Activated T-helper 2 cell treated with anti-CD3 and anti-CD28 coated beads, Interferon-gamma antibody, Interleukin-2, Interleukin-4, amounts not matched to agents 10 μg/mL and 5 μg/mL and 100 μg/mL, durations not matched to agents 14 hours and 24 hours and 36 hours (primary cell): ENCODE measurements at regions of chr22 and their contacts with region 1.

Region 1: DNA sequence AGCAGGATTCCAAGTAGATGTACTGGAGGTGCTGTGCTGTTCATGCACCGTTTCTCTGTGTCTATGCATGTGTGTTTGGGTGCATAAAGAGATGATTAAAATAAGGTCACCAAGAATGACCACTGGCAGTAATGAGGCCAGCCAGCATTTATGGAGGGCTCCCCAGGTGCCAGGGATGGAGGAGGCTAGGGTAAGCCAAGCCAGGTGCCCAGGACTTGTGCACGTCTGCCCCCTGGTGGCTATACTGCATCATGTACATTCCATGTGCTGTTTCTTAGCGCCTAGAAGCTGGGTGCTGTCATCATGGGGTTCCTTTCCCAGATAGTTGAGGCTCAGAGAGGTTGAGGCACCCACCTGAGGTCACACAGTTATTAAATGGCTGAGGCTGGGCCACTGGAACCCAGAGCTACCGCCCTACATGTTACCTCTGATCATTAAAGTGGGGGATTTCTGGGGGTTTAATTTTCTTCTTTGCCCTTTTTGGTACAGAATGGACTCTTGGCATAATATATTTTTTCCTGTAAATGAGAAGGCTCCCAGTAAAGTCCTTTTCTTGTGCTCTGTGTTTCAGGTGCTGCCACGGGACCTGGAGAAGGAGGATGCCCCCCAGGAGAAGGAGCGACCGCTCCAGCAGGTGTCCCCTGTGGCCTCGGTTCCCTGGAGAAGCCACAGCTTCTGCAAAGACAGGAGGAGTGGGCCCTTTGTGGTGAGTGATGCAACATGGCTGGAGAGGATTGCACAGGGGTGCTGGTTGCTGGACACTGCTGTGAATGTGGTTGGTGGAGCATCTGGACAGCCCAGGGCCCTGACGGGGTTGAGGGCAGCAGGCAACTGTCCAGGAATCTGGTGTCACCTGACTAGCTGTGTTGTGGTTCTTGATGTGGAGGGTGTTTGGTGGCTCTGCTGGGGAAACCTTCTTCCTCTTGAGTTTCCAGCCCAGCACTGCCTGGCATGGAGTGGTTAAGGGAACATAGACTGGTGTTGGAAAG is 96.4 kb downstream of the KIAA1671 start:
- DNase-seq: peak; percentile 62
- H3K4me3 Mint-ChIP-seq: no peak overlapping the region
- H3K27ac Mint-ChIP-seq: no peak overlapping the region
- H3K4me1 Mint-ChIP-seq: peaks cover 9% of the 10 kb centered on the region
- H3K27me3 Mint-ChIP-seq: peaks cover 5% of the 10 kb centered on the region

Region 2: DNA sequence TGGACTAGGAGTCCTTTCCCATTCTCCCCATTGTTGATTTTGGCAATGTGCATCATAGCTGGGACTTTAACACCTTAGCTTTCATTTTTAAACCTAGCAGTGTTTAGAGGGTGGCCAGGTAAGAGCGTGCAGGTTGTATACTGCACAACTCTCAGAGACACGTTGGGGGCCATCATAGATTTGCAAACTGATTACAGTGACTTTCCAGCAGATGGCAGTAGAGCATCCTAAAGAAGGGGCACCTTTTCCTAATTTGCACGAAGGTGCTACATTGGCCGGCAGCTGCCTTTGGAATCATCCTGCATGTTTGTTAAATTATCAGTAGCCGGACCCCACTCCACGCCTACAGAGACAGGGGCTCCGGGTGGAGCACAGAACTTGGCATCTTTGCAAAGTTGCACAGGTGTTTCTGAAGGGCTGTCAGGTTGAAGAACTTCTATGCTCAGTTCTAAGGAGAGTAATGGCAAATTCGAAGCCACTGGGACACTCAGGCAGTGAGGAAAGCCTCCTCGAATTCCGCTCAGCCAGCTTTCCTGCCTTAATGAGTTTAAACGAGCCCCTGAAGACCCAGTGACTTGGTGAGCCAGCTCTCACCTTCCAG is 110.1 kb before region 1 on chr22:
- intact Hi-C with region 1: loop called (anchors 1 kb)
- DNase-seq: no peak
- H3K4me3 Mint-ChIP-seq: no peak overlapping the region
- H3K27ac Mint-ChIP-seq: no peak overlapping the region
- H3K4me1 Mint-ChIP-seq: no peaks in the 10 kb centered on the region
- H3K27me3 Mint-ChIP-seq: peaks cover 2% of the 10 kb centered on the region

Region 3: DNA sequence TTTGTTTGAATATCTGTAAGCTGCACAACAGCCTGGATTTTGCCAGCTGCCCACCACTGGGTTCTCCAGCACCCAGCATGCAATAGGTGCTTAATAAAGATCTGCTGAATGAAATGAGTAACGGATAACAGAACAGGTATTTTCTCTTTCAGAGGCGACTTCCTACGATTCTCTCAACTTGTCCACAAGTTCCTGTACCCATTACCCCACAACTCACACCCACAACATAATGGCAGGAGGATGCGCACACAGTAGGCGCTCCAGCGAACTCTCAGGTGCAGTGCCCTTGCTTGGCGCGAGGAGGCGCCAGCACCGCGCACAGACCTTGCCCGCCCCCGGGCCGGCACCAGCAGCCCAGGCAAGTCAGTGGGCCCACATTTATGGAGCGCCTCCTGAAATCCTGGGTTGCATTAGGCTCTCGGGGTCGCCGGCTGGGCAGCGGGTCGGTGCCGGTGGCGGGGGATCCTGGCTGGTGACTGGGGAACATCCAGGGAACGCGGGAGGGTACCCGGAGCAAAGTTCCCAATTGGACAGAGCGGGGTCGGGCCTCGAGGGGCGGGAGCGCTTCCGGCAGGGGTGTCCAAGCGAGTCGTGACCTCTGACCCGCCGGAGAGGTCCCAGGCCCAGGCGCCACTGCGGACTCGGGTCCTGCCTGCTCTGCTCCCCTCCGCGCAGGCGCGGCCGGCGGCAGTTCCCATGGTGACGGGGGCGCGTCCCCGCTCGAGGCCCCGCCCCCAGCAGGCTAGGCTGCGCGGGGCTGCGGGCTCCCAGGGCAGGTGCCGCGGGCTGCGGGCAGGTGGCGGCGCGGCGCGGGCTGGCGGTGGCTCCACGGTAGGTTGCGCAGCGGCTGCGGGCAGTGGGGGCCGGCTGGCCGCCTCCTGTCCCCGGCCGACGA is 96.8 kb before region 1 on chr22 and contains the start of gene KIAA1671:
- intact Hi-C with region 1: loop called (anchors 1 kb)
- DNase-seq: peak; percentile 85
- H3K4me3 Mint-ChIP-seq: peak within 1 kb of the TSS; percentile 80
- H3K27ac Mint-ChIP-seq: peak within 1 kb of the TSS; percentile 40
- H3K4me1 Mint-ChIP-seq: peaks cover 16% of the 10 kb centered on the region
- H3K27me3 Mint-ChIP-seq: peaks cover 56% of the 10 kb centered on the region
- total RNA-seq, gene KIAA1671: 10.5 TPM in 2 replicates

Region 4: DNA sequence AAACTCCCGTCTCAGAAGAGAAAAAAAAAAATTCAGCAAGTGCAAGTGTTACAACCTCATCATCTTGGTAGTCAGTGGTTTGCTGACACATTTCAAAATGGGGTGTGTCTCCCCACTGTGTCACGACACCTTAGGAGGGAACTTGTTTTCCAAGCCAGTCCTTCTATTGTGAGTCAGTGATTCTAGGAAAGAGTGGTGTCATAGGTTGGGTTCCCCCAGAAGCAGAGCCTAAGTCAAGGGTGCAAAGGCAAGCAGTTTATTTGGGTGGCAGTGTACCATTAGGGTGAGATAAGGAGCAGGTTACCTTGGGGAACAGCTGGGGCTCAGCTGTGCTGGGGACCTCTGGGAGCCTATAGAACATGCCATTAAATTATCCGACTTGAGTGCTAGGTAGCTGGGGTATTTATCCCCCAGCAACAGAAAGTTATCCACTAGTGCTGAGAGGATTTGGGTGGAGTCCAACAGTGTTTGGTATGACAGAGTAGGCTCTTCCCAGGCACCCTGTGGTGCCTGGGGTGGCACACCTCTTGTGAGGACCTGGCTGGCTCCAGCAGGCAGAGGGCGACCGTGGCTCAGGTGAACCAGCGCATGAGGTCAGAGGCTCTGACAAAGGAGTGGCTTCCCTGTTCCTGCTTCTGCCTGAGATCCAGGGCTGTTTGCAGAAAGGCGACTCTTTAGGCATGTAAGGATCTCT is 54.7 kb before region 1 on chr22:
- intact Hi-C with region 1: loop called (anchors 1 kb)
- DNase-seq: peak; percentile 63
- H3K4me3 Mint-ChIP-seq: no peak overlapping the region
- H3K27ac Mint-ChIP-seq: peak overlapping the region; percentile 85
- H3K4me1 Mint-ChIP-seq: peaks cover 44% of the 10 kb centered on the region
- H3K27me3 Mint-ChIP-seq: no peaks in the 10 kb centered on the region